ENCODE measurements at regions of chr1 and their contacts with region 1.

Region 1: DNA sequence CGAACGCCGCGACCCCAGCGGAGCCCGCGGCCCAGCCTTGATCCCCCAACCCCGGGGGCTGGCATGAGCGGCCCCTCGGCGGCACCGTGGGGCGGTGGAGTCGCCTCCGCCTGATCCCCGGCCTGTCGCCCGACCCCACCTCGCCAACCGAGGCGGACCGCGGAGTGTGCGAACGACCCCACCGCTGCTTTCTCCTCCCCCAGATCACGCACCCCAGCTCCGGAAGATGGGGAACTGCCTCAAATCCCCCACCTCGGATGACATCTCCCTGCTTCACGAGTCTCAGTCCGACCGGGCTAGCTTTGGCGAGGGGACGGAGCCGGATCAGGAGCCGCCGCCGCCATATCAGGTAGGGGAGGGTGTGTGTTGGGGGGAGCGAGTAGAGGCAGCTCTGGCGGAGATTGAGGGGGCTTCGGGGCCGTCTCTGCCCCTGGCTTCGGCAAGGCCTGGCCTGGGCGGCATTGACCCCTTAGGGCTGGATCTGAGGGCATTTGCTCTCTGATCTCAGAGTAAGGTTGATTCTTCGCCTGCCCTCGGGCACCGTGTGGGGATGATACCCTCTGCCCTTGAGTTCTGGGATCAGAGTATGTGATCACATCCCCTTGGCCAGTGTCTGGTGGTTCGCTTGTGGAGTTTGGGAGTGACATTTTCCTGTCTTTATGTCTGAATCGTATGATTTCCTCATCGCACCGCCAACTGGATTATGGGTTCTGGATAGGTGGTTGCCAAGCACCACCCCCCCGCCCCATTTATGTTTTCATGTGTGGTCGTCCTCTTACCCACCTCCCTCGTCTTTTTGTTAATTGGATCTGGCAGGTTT is 668 bp downstream of the RNF11 start:
- DNase-seq: peak in 33 of 35 experiments; percentile 7 to 55 (median 26)
- ATAC-seq: peak; percentile 21 to 44 (median 34)
- H3K4me3 ChIP-seq: peak overlapping the region; percentile 78 to 91
- H3K4me3 Mint-ChIP-seq: no peak overlapping the region
- H3K27ac ChIP-seq: peak overlapping the region; percentile 63
- H3K27ac Mint-ChIP-seq: no peak overlapping the region
- H3K4me1 ChIP-seq: peaks cover 19 to 38% of the 10 kb centered on the region in 2 experiments
- H3K4me1 Mint-ChIP-seq: peaks cover 22 to 46% (median 45%) of the 10 kb centered on the region in 3 donors
- H3K27me3 ChIP-seq: no peaks in the 10 kb centered on the region
- H3K27me3 Mint-ChIP-seq: no peaks in the 10 kb centered on the region

Region 2: DNA sequence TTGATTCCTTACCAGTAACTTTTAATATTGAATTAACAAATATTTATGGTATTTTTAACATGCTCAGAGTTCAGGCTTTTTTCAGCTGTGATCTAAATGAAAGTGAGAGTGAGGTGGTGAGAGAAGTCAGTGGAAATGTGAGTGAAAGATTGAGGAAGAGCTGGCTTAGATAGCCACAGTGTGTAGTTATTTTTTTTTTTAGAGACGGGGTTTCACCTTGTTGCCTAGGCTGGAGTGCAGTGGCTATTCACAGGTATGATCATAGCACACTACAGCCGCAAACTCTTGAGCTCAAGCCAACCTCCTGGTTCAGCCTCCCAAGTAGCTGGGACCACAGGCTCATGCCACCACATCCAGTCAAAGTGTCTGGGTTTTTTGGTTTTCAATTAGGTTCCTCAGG is 10.3 kb after region 1 on chr1:
- CTCF ChIA-PET with region 1: no interaction called
- POLR2A ChIA-PET with region 1: no interaction called
- DNase-seq: no peak
- ATAC-seq: no peak
- H3K4me3 ChIP-seq: no peak overlapping the region
- H3K4me3 Mint-ChIP-seq: no peak overlapping the region
- H3K27ac ChIP-seq: no peak overlapping the region
- H3K27ac Mint-ChIP-seq: no peak overlapping the region
- H3K4me1 ChIP-seq: peaks cover 0 to 13% of the 10 kb centered on the region in 2 experiments
- H3K4me1 Mint-ChIP-seq: peaks cover 60 to 68% (median 61%) of the 10 kb centered on the region in 3 donors
- H3K27me3 ChIP-seq: no peaks in the 10 kb centered on the region
- H3K27me3 Mint-ChIP-seq: no peaks in the 10 kb centered on the region

Region 3: DNA sequence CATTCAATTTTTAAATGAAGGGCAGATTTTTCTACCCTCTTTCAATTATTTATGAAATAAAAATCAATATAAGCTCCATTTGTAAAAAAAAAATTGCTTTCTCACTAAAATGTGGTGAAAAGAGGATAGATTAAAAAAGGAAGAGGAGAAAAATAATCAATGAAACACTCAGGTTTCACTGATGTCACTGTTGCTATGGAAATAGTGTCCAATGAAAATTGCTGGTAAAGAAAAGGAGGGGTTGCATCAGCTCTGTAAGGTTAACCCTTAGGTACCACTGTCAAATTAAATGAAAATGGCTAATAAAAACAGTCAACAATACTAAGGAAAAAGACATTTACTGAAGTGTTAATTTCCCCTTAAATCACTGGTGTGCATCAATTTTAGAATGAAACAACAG is 185.2 kb after region 1 on chr1:
- CTCF ChIA-PET with region 1: no interaction called
- POLR2A ChIA-PET with region 1: no interaction called
- DNase-seq: peak in 1 of 35 experiments; percentile 44
- ATAC-seq: peak in 2 of 4 experiments; percentile 30 to 70
- H3K4me3 ChIP-seq: no peak overlapping the region
- H3K4me3 Mint-ChIP-seq: no peak overlapping the region
- H3K27ac ChIP-seq: no peak overlapping the region
- H3K27ac Mint-ChIP-seq: no peak overlapping the region
- H3K4me1 ChIP-seq: no peaks in the 10 kb centered on the region
- H3K4me1 Mint-ChIP-seq: peaks cover 7 to 18% (median 14%) of the 10 kb centered on the region in 3 donors
- H3K27me3 ChIP-seq: no peaks in the 10 kb centered on the region
- H3K27me3 Mint-ChIP-seq: no peaks in the 10 kb centered on the region

Region 4: DNA sequence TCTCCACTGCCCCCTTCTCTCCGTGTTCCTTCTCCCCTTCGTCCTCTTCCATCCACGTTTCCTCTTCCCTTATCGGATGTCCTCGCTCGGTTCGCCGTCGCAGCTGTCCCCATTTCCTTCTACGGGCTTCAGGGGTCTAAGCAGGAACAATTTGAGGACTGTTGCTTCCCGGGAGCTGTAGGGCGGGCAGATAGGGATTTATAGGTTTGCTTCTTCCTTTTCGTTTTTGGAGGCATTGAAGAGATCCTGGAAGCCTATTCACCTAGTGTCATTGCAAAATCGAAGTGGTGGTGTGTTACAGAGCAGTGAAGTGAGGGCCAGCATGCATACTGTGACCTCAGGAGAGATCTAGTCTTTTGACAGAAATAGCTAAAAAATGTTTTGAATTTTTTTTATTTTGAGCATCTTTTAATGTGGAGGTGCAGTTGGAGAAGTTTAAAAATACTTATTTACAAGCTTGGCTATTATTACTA is 1490.4 kb after region 1 on chr1:
- CTCF ChIA-PET with region 1: no interaction called
- POLR2A ChIA-PET with region 1: interaction called in 1 of 2 experiments, 12 read pairs
- DNase-seq: peak in 1 of 35 experiments; percentile 28
- ATAC-seq: no peak
- H3K4me3 ChIP-seq: peak overlapping the region; percentile 72 to 85
- H3K4me3 Mint-ChIP-seq: peak overlapping the region; percentile 79 to 94 (median 85)
- H3K27ac ChIP-seq: peak overlapping the region; percentile 39
- H3K27ac Mint-ChIP-seq: peak overlapping the region; percentile 40 to 80
- H3K4me1 ChIP-seq: peaks cover 14 to 21% of the 10 kb centered on the region in 2 experiments
- H3K4me1 Mint-ChIP-seq: peaks cover 41 to 54% (median 47%) of the 10 kb centered on the region in 3 donors
- H3K27me3 ChIP-seq: no peaks in the 10 kb centered on the region
- H3K27me3 Mint-ChIP-seq: peaks cover 0 to 5% of the 10 kb centered on the region in 2 donors